Heart left ventricle (tissue), 16 donors: ENCODE measurements at regions of chr11 and their contacts with region 1.

Region 1: GRCh38 chr11:125351033-125351867 is 144.8 kb downstream of the FEZ1 start:
- DNase-seq: no peak
- ATAC-seq: no peak
- H3K4me3 ChIP-seq: no peak overlapping the region
- H3K27ac ChIP-seq: no peak overlapping the region
- H3K4me1 ChIP-seq: peaks cover 0 to 17% (median 4%) of the 10 kb centered on the region in 12 donors
- H3K27me3 ChIP-seq: no peaks in the 10 kb centered on the region
- CTCF ChIP-seq: no peak
- POLR2A ChIP-seq: no peak

Region 2: DNA sequence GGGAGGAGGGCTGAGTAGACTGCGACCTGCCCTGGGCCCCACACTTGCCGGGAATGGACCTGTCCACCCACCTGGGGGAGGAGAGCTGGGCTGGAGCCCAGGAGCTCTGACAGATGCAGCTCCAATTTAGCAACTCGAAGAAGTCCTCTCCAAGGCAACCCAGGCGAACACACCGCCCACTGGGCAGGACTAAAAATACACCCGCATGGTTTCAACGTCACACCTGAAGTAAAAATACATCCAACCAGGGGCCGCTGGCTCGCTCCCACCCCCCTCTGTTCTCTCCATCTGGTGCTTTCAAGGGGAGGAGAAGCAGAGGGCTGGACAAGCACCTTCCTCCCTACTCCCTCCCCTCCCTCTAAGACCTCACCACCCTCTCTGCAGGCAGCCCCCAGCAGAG is 24.9 kb after region 1 on chr11:
- intact Hi-C with region 1: loop called in 1 of 10 experiments (anchors 1 kb)
- DNase-seq: peak; percentile 77 to 92 (median 80)
- ATAC-seq: peak; percentile 94 to 96 (median 94)
- H3K4me3 ChIP-seq: no peak overlapping the region
- H3K27ac ChIP-seq: peak overlapping the region in 11 of 12 donors; percentile 3 to 81 (median 58)
- H3K4me1 ChIP-seq: peaks cover 0 to 46% (median 25%) of the 10 kb centered on the region in 12 donors
- H3K27me3 ChIP-seq: no peaks in the 10 kb centered on the region
- CTCF ChIP-seq: peak in 2 of 12 donors; percentile 5 to 14
- POLR2A ChIP-seq: peak in 1 of 2 donors; percentile 50